Activated CD4-positive, alpha-beta memory T cell treated with anti-CD3 and anti-CD28 coated beads, Interleukin-2, amount 10 ng/mL, durations not matched to agents 7 days and 5 days (primary cell): ENCODE measurements at regions of chr5 and their contacts with region 1.

Region 1: DNA sequence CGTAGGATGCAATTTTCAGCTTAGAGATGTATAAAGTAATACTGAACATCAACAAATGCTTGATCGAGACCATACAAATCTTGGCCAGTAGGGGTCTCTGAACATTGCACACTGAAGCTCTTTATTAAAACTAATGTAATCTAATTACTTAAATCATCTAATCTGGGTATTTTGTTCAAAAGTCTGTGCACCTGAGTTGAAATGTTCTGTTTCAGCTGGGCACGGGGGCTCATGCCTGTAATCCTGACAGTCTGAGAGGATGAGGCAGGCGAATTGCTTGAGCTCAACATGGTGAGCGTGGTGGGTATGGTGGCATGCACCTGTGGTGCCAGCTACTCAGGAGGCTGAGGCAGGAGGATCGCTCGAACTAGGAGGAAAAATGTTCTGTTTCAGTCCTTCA is 41.0 kb downstream of the ESM1 start:
- DNase-seq: peak; percentile 43
- H3K4me3 Mint-ChIP-seq: no peak overlapping the region
- H3K27ac Mint-ChIP-seq: no peak overlapping the region
- H3K4me1 Mint-ChIP-seq: peaks cover 10% of the 10 kb centered on the region
- H3K27me3 Mint-ChIP-seq: peaks cover 2% of the 10 kb centered on the region

Region 2: DNA sequence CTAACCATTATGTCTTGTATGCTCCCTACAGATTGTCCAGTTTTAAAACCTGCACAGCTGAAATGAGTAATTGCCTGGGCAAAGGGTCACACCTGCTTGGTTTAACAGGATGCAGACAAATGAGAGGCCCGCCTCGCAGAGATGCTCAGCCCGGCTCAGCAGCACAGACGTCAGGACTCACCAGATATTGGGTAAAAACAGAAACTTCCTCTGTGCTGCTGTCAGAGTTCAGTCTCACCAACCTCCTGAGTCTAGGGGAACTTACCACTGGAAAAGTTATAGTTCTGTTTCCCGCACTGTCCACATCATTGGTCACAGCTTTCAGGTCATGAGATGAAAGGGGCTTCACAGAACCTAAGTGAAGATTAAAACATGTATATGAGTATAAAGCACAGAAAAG is 111.5 kb before region 1 on chr5:
- CTCF ChIA-PET with region 1: no interaction called
- POLR2A ChIA-PET with region 1: no interaction called
- DNase-seq: no peak
- H3K4me3 Mint-ChIP-seq: no peak overlapping the region
- H3K27ac Mint-ChIP-seq: no peak overlapping the region
- H3K4me1 Mint-ChIP-seq: peaks cover 17% of the 10 kb centered on the region
- H3K27me3 Mint-ChIP-seq: peaks cover 17% of the 10 kb centered on the region

Region 3: GRCh38 chr5:54905943-54906537 is 38.3 kb before region 1 on chr5:
- CTCF ChIA-PET with region 1: interaction called, 51 read pairs
- POLR2A ChIA-PET with region 1: no interaction called
- DNase-seq: peak; percentile 80
- H3K4me3 Mint-ChIP-seq: no peak overlapping the region
- H3K27ac Mint-ChIP-seq: no peak overlapping the region
- H3K4me1 Mint-ChIP-seq: peaks cover 51% of the 10 kb centered on the region
- H3K27me3 Mint-ChIP-seq: peaks cover 46% of the 10 kb centered on the region

Region 4: DNA sequence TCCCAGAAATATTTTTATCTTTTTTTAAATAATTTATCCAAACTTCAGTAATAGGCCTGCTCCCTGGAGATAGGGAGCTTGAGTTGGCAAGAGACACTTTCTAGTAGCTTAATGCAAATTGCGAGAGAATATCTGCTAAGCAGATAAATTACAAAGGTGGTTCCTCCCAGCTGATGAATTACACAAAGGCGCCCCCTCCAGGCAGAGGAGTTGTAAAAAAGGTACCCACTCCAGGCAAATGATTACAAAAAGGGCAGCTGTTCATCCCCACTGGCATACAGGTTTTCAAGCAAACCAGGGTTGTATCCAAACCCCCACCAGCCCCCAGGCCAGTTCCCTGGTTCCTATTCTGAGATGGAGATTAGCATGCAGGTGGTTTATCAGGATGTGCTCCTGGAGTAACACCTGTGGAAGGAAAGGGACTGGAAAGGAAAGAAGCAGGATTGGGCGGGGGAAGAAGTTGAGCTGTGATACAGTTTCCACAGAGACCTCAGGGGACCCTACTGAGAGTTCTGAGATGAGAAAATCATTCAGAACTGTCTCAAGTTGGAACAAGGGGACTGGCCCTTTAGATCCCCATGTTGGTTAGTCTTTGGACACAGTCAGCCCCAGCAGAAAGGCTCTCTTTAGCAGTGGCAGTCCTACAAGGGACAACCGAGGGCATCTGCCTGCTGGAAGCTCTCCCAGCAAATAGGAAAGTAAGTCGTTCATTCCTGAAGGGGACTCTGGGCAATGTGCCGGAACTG is 15.5 kb after region 1 on chr5:
- CTCF ChIA-PET with region 1: interaction called, 29 read pairs
- POLR2A ChIA-PET with region 1: interaction called, 3 read pairs
- DNase-seq: peak; percentile 46
- H3K4me3 Mint-ChIP-seq: no peak overlapping the region
- H3K27ac Mint-ChIP-seq: no peak overlapping the region
- H3K4me1 Mint-ChIP-seq: no peaks in the 10 kb centered on the region
- H3K27me3 Mint-ChIP-seq: peaks cover 17% of the 10 kb centered on the region

Region 5: DNA sequence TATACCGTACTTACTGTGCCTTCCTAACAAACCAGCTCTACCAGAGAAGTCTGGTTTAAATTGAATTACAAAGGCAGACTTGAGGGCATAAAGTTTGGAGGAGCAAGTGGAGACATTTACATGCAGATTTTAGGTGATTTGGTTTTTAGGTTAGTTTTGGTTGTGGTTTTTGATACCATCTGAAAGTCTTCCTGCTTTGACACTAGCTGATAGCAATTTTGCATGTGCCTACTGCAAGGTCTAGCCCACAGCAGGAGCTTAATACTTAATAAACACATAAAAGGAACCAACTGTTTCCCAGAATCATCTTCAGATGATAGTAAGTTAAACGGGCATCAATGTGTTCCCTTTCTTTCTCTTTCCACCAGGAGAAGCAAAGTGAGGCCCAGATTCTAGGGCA is 44.5 kb after region 1 on chr5:
- CTCF ChIA-PET with region 1: interaction called, 13 read pairs
- POLR2A ChIA-PET with region 1: interaction called, 3 read pairs
- DNase-seq: no peak
- H3K4me3 Mint-ChIP-seq: no peak overlapping the region
- H3K27ac Mint-ChIP-seq: peak overlapping the region; percentile 54
- H3K4me1 Mint-ChIP-seq: peaks cover 61% of the 10 kb centered on the region
- H3K27me3 Mint-ChIP-seq: peaks cover 3% of the 10 kb centered on the region

Region 6: GRCh38 chr5:55062039-55062779 is 117.8 kb after region 1 on chr5:
- CTCF ChIA-PET with region 1: interaction called, 10 read pairs
- POLR2A ChIA-PET with region 1: interaction called, 7 read pairs
- DNase-seq: peak; percentile 88
- H3K4me3 Mint-ChIP-seq: peak overlapping the region; percentile 73
- H3K27ac Mint-ChIP-seq: peak overlapping the region; percentile 99
- H3K4me1 Mint-ChIP-seq: peaks cover 71% of the 10 kb centered on the region
- H3K27me3 Mint-ChIP-seq: no peaks in the 10 kb centered on the region

Region 7: GRCh38 chr5:55102348-55102747 is 158.0 kb after region 1 on chr5 and contains the start of gene GZMA:
- CTCF ChIA-PET with region 1: interaction called, 45 read pairs
- POLR2A ChIA-PET with region 1: interaction called, 13 read pairs
- DNase-seq: peak; percentile 47
- H3K4me3 Mint-ChIP-seq: peak within 1 kb of the TSS; percentile 83
- H3K27ac Mint-ChIP-seq: peak within 1 kb of the TSS; percentile 93
- H3K4me1 Mint-ChIP-seq: peaks cover 81% of the 10 kb centered on the region
- H3K27me3 Mint-ChIP-seq: peaks cover 5% of the 10 kb centered on the region
- total RNA-seq, gene GZMA: 1,058 to 1,099 TPM

Region 8: DNA sequence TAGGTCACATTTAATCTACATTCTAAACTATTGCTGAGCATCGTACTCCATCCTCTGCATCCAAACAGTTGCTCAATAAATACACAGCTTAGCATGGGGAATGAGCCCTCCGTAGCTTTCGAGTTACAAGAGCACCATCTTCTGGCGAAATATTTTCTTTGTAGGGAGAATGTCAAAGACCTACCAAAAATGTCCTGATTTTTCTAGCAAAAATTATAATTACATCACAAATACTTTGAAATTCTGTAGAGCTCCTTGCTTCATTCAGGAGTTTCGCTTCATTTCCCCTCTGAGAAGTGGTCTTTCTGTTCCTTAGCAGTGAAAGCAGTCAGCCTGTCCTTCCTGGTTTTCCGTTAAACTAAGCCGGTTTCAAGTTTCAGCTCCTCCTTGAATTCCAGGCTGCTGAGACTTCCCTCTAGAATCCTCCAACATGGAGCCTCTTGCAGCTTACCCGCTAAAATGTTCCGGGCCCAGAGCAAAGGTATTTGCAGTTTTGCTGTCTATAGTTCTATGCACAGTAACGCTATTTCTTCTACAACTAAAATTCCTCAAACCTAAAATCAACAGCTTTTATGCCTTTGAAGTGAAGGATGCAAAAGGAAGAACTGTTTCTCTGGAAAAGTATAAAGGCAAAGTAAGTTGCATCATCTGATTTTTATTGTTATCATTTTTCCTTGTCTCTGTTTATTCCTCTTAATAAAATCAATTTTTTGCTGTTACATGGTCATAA is 215.6 kb after region 1 on chr5 and contains the start of gene GPX8:
- CTCF ChIA-PET with region 1: interaction called, 16 read pairs
- POLR2A ChIA-PET with region 1: interaction called, 4 read pairs
- DNase-seq: peak; percentile 28
- H3K4me3 Mint-ChIP-seq: no peak within 1 kb of the TSS
- H3K27ac Mint-ChIP-seq: no peak within 1 kb of the TSS
- H3K4me1 Mint-ChIP-seq: no peaks in the 10 kb centered on the region
- H3K27me3 Mint-ChIP-seq: peaks cover 53% of the 10 kb centered on the region
- total RNA-seq, gene GPX8: not detected